Activated CD8-positive, alpha-beta T cell treated with anti-CD3 and anti-CD28 coated beads for 36 hours (primary cell): ENCODE measurements at regions of chr15 and their contacts with region 1.

Region 1: DNA sequence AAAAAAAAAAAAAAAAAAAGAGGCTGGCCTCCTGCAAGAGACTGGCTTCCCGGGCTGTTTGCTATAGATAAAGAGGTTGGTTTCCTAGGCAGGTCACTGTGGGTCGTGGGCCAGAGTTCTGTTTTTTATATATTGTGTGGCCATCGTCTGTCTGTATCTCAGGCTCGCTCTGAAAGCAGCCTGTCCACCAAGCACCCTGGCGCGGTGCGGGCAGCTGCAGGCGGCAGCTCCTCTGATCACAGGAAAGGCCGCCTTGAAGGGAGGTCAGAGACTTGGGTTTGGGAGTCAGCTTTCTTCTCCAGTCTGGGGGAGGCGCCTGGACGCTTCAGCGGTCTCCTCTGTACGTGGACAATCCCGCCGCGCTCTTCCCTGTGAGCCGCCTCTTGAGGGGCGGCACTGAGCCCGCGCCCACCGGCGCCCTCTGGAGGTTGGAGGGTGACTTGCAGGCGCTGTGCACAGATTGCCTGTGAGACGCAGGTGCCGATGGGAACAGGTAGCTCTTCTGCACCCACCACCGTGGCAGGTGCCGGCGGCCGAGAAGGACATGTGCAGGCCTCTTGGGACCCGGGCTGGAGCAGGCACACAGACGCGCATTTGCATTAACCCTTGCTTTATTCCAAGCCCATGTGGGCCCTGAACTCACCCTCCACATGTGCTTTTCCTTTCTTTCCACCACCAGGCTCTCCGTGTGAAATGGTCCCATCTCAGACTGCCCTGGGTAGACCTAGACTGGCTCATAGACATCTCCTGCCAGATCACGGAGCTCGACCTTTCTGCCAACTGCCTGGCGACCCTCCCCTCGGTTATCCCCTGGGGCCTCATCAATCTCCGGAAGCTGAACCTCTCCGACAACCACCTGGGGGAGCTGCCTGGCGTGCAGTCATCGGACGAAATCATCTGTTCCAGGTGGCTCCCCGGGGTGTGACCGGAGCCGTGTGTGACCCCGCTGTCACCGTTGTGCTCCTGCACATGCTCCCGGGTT is 89.3 kb downstream of the LRRK1 start:
- DNase-seq: peak; percentile 91
- ATAC-seq: peak; percentile 99
- H3K4me3 Mint-ChIP-seq: peak overlapping the region; percentile 87
- H3K27ac Mint-ChIP-seq: no peak overlapping the region
- H3K4me1 Mint-ChIP-seq: peaks cover 21% of the 10 kb centered on the region
- H3K27me3 Mint-ChIP-seq: peaks cover 6% of the 10 kb centered on the region
- CTCF ChIP-seq: peak; percentile 96

Region 2: DNA sequence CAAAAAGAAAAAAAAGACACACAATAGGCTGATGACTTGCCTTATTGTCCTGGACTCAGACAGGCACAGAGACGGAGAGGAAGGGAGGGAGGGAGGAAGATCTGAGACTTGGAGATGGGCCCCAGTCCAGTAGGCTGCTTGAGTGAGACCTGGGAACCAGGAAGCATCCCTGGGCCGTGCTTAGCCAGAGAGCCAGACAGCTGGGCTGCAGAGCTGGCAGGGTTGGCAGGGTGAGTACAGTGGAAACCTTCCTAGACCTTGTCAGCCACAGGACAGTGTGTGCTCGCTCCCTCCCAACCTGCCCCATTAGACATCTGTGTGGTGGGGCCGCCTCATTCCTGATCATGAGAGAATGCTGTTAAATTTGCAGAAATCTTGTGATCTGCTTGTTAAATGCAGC is 236.7 kb before region 1 on chr15:
- CTCF ChIA-PET with region 1: no interaction called
- POLR2A ChIA-PET with region 1: no interaction called
- intact Hi-C with region 1: no loop called
- DNase-seq: no peak
- ATAC-seq: no peak
- H3K4me3 Mint-ChIP-seq: no peak overlapping the region
- H3K27ac Mint-ChIP-seq: no peak overlapping the region
- H3K4me1 Mint-ChIP-seq: no peaks in the 10 kb centered on the region
- H3K27me3 Mint-ChIP-seq: no peaks in the 10 kb centered on the region
- CTCF ChIP-seq: no peak

Region 3: GRCh38 chr15:100873029-100873677 is 135.3 kb before region 1 on chr15:
- CTCF ChIA-PET with region 1: interaction called, 10 read pairs
- POLR2A ChIA-PET with region 1: no interaction called
- intact Hi-C with region 1: no loop called
- DNase-seq: peak; percentile 63
- ATAC-seq: peak; percentile 74
- H3K4me3 Mint-ChIP-seq: no peak overlapping the region
- H3K27ac Mint-ChIP-seq: no peak overlapping the region
- H3K4me1 Mint-ChIP-seq: no peaks in the 10 kb centered on the region
- H3K27me3 Mint-ChIP-seq: peaks cover 23% of the 10 kb centered on the region
- CTCF ChIP-seq: peak; percentile 86

Region 4: DNA sequence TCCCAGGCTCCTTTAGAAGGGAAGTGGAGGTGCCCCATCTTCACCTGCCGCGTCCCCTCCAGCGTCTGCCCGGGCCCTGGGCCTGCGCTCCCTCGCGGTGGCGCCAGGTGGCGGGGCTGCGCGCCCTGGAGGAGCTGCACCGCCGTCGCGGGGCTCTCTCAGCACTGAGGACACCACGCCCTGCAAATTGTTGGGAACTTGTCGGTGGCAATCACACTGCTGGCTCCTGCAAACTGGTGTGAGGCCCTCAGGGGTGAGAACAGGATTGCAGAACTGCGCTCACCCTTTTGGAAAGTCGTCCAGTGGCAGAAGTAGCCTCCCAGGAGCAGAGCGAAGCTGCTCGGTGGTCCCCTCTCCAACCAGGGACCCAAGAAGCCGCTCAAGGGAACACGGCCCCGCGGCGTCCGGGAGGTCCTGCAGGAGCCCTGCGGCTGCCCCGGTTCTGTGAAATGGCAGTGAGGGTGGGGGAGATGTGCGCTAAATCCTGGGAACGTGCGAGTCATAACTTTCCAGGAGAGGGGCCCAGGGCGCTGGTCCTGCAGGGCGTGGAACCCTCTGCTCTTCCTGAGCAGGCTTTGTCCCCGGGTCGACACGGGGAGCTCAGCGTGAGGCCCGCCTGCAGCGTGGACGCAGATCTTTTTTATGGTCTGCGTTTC is 90.3 kb before region 1 on chr15:
- CTCF ChIA-PET with region 1: interaction called, 243 read pairs
- POLR2A ChIA-PET with region 1: interaction called, 9 read pairs
- intact Hi-C with region 1: loop called (anchors 2 kb)
- DNase-seq: peak; percentile 78
- ATAC-seq: peak; percentile 97
- H3K4me3 Mint-ChIP-seq: peak overlapping the region; percentile 64
- H3K27ac Mint-ChIP-seq: no peak overlapping the region
- H3K4me1 Mint-ChIP-seq: peaks cover 15% of the 10 kb centered on the region
- H3K27me3 Mint-ChIP-seq: peaks cover 66% of the 10 kb centered on the region
- CTCF ChIP-seq: peak; percentile 92

Region 5: DNA sequence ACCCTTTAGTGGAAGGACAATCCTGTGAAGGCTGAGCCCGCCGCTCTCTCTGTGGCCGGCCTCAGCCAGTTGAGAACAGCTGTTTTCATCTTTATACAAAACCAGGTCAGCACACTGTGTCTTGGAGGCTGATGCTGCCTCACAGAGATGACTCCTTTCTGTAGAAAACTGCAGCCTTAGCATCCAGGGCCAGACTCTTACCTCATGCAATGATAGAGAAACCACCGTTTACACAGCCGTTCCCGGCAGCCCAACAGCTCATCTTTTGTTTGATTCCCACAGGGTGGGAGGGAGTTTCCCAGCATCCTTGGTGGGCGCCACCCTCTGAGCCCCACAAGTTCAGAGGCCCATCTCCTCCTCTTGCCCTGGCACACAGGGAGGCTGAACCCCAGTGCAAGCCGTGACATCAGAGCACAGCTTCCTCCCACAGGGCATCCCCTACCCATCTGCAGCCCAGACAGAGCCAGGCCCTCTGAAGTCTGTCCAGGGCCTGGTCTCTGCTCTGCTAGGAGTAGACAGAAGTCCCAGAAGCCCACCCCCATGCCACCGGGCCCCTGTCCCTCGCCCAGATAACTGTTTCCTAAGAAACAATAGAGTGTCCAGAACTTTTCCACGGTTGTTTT is 15.7 kb after region 1 on chr15:
- CTCF ChIA-PET with region 1: interaction called, 77 read pairs
- POLR2A ChIA-PET with region 1: no interaction called
- intact Hi-C with region 1: no loop called
- DNase-seq: no peak
- ATAC-seq: no peak
- H3K4me3 Mint-ChIP-seq: no peak overlapping the region
- H3K27ac Mint-ChIP-seq: no peak overlapping the region
- H3K4me1 Mint-ChIP-seq: no peaks in the 10 kb centered on the region
- H3K27me3 Mint-ChIP-seq: peaks cover 2% of the 10 kb centered on the region
- CTCF ChIP-seq: no peak

Region 6: GRCh38 chr15:101070502-101071273 is 62.2 kb after region 1 on chr15:
- CTCF ChIA-PET with region 1: no interaction called
- POLR2A ChIA-PET with region 1: no interaction called
- intact Hi-C with region 1: no loop called
- DNase-seq: no peak
- ATAC-seq: peak; percentile 74
- H3K4me3 Mint-ChIP-seq: no peak overlapping the region
- H3K27ac Mint-ChIP-seq: peak overlapping the region; percentile 58
- H3K4me1 Mint-ChIP-seq: peaks cover 9% of the 10 kb centered on the region
- H3K27me3 Mint-ChIP-seq: no peaks in the 10 kb centered on the region
- CTCF ChIP-seq: no peak

Region 7: DNA sequence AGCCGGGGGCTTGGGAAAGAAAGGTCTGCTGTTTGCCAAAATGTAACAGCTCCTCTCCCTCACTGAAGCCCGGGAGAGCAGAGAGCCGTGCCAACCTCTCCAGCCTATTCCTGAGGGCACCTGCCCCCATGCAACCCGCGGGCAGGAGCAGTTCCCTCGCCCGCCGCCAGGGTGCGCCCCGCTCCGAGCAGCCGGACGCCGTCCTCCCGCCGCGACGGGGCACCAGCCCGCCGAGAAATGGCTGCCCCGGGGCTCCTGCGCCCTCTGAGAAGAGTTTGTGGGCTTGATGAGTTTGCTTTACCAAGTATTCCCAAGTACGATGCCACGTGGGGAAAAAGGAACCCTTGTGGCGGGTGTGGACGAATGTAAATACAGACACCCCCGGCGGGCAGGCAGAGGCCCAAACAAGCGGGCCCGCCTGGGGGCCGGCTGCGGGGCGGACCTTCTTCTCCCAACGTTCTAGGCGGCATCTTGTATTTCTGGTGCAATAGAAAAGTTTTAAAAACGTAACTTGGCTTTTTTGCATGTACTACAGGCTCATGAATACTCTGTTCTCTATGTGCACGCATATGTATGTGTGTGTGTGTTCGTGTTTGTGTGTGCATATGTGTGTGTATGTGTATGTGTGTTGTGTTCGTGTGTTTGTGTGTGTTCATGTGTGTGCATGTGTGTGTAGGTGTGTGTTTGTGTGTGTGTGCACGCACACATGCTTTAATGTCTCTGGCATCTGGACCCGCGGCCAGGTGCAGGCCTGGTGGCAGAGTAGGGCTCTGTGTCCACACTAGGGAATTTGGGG is 80.5 kb after region 1 on chr15:
- CTCF ChIA-PET with region 1: interaction called, 17 read pairs
- POLR2A ChIA-PET with region 1: no interaction called
- intact Hi-C with region 1: no loop called
- DNase-seq: peak; percentile 83
- ATAC-seq: peak; percentile 97
- H3K4me3 Mint-ChIP-seq: no peak overlapping the region
- H3K27ac Mint-ChIP-seq: no peak overlapping the region
- H3K4me1 Mint-ChIP-seq: peaks cover 8% of the 10 kb centered on the region
- H3K27me3 Mint-ChIP-seq: no peaks in the 10 kb centered on the region
- CTCF ChIP-seq: peak; percentile 99

Region 8: DNA sequence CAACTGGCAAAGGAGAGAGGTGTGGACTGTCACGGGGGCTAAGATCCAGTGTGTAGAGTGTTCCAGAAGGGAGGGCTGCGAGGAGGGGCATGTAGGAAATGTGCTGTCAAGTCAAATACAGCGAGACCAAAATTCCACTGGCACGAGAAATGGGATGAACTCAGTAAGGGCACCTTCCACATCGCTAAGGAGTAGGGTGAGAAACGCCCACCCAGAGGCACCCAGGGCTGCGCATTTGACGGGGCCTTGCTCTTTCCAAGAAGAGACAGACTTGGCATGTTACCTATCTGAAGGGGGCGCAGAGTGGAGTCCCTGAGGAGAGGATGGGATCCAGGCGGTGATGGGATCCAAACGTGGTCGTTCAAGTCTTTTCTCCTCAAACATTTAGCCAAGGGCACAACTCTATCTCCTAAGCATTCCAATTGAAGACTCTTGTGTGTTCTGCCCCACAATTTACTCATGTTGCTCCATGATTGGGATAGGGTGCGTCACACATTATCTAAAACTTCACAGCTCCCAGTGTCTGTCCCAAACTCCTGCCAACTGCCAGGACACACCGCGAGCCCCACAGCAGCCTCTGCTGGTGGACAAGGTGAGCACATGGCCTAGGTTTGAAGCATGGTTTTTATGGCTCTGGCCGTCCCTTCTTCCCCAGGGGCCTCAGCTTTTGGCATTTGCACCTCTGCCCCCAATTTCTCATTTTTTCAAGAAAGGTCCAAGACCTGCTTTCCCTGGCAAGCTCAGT is 261.2 kb after region 1 on chr15:
- CTCF ChIA-PET with region 1: interaction called, 11 read pairs
- POLR2A ChIA-PET with region 1: no interaction called
- intact Hi-C with region 1: no loop called
- DNase-seq: no peak
- ATAC-seq: no peak
- H3K4me3 Mint-ChIP-seq: no peak overlapping the region
- H3K27ac Mint-ChIP-seq: peak overlapping the region; percentile 32
- H3K4me1 Mint-ChIP-seq: peaks cover under 1% of the 10 kb centered on the region
- H3K27me3 Mint-ChIP-seq: no peaks in the 10 kb centered on the region
- CTCF ChIP-seq: no peak

Region 9: DNA sequence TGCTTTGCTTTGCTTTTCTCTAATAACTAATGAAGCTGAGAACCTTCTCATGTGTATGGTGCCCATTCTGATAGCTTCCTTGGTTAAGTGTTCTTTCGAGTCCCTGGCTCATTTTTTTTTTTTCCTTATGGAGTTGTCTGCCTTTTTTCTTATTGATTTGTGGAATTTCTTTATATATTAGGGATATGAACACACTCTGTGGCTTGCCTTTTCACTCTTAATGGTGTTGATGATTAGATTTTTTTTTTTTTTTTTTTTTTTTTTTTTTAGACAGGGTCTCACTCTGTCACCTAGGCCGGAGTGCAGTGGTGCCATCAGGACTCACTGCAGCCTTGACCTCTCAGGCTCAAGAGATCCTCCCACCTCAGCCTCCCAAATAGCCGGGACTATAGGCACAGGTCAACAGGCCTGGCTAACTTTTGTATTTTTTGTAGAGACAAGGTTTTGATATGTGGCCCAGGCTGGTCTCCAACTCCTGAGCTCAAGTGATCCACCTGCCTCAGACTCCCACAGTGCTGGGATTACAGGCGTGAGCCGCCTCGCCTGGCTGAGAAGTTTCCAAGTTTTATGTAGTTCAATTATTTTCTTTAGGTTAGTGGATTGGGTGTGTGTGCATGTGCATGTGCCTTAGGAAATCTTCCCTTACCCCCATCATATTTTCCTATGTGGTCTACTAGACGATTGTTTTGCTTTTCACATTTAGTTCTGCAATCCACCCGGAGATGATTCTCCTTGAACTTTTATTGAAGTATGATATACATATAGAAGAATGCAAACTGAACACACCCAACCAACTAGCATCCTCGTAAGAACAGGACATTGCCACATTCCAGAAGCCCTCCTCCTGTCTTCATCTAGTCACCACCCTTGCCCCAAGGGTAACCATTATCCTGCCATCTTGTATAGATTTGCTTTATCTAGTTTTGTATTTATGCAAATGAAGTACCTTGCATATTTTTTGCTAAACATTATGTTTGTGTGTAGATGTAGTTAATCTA is 288.3 kb after region 1 on chr15:
- CTCF ChIA-PET with region 1: no interaction called
- POLR2A ChIA-PET with region 1: no interaction called
- intact Hi-C with region 1: no loop called
- DNase-seq: no peak
- ATAC-seq: no peak
- H3K4me3 Mint-ChIP-seq: peak overlapping the region; percentile 80
- H3K27ac Mint-ChIP-seq: peak overlapping the region; percentile 95
- H3K4me1 Mint-ChIP-seq: peaks cover 30% of the 10 kb centered on the region
- H3K27me3 Mint-ChIP-seq: no peaks in the 10 kb centered on the region
- CTCF ChIP-seq: no peak